Activated CD4-positive, alpha-beta T cell treated with anti-CD3 and anti-CD28 coated beads, Interleukin-2, amount 10 ng/mL, durations not matched to agents 24 days and 14 days (primary cell): ENCODE measurements at regions of chr13 and their contacts with region 1.

Region 1: DNA sequence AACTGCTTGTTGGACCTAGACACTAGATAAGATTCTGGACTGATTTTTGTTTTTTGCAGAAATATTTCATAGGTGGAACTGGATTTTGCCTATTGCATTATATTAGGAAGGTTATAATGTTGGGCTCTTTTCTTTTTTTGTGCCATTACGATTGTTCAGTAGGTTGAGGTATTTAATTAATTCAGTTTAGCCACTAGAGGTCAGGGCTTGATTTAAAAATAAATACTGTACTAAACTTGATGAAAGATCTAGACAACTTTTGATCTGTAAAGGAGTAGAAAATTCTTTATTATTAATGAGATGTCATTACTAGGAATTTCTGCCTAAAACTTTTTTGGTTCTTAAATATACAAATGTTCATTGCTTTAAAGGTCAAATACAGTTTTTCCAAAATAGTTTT is 15.2 kb upstream of the SUPT20H start:
- DNase-seq: no peak
- H3K4me3 Mint-ChIP-seq: no peak overlapping the region
- H3K27ac Mint-ChIP-seq: no peak overlapping the region
- H3K4me1 Mint-ChIP-seq: no peaks in the 10 kb centered on the region
- H3K27me3 Mint-ChIP-seq: peaks cover 10% of the 10 kb centered on the region

Region 2: GRCh38 chr13:37143911-37144310 is 69.2 kb after region 1 on chr13:
- intact Hi-C with region 1: no loop called
- DNase-seq: no peak
- H3K4me3 Mint-ChIP-seq: no peak overlapping the region
- H3K27ac Mint-ChIP-seq: no peak overlapping the region
- H3K4me1 Mint-ChIP-seq: no peaks in the 10 kb centered on the region
- H3K27me3 Mint-ChIP-seq: no peaks in the 10 kb centered on the region

Region 3: GRCh38 chr13:37602747-37603381 is 528.2 kb after region 1 on chr13:
- intact Hi-C with region 1: loop called (anchors 10 kb)
- DNase-seq: no peak
- H3K4me3 Mint-ChIP-seq: no peak overlapping the region
- H3K27ac Mint-ChIP-seq: no peak overlapping the region
- H3K4me1 Mint-ChIP-seq: no peaks in the 10 kb centered on the region
- H3K27me3 Mint-ChIP-seq: no peaks in the 10 kb centered on the region